ENCODE measurements at regions of chr6 and their contacts with region 1.

Region 1: GRCh38 chr6:13428583-13429405 is 58.6 kb downstream of the GFOD1 start:
- DNase-seq: no peak
- H3K4me3 ChIP-seq: no peak overlapping the region
- H3K27ac ChIP-seq: peak overlapping the region; percentile 78 to 83
- H3K4me1 ChIP-seq: peaks cover 0 to 6% of the 10 kb centered on the region in 2 donors
- H3K27me3 ChIP-seq: no peaks in the 10 kb centered on the region
- CTCF ChIP-seq: no peak
- POLR2A ChIP-seq: no peak

Region 2: GRCh38 chr6:13375360-13375878 is 53.4 kb before region 1 on chr6:
- intact Hi-C with region 1: no loop called
- DNase-seq: no peak
- H3K4me3 ChIP-seq: no peak overlapping the region
- H3K27ac ChIP-seq: no peak overlapping the region
- H3K4me1 ChIP-seq: no peaks in the 10 kb centered on the region
- H3K27me3 ChIP-seq: no peaks in the 10 kb centered on the region
- CTCF ChIP-seq: no peak
- POLR2A ChIP-seq: no peak

Region 3: GRCh38 chr6:13407709-13408695 is 20.8 kb before region 1 on chr6:
- intact Hi-C with region 1: loop called (anchors 1 kb)
- DNase-seq: peak in 1 of 2 donors; percentile 54
- H3K4me3 ChIP-seq: no peak overlapping the region
- H3K27ac ChIP-seq: peak overlapping the region; percentile 81 to 86
- H3K4me1 ChIP-seq: peaks cover 4 to 5% of the 10 kb centered on the region in 2 donors
- H3K27me3 ChIP-seq: no peaks in the 10 kb centered on the region
- CTCF ChIP-seq: no peak
- POLR2A ChIP-seq: no peak

Region 4: DNA sequence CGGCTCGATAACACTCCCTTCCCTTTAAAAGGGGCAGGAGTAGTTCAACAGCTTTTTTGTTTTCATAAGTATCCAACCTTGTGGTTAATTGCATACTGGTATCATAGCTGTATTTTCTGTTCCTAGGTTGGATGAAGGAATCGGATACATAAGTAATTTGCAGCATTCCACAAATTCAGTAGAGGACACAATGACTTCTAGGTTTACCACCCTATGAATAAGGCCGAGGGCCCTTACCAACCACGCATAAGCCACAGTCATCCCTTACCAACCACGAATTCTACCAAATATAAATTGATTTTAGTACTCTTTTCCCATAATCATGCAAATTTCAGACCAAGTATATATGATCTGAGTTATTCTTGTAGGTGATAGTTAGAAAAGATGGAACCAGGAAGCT is 349.2 kb after region 1 on chr6:
- intact Hi-C with region 1: no loop called
- DNase-seq: no peak
- H3K4me3 ChIP-seq: no peak overlapping the region
- H3K27ac ChIP-seq: no peak overlapping the region
- H3K4me1 ChIP-seq: no peaks in the 10 kb centered on the region
- H3K27me3 ChIP-seq: no peaks in the 10 kb centered on the region
- CTCF ChIP-seq: no peak
- POLR2A ChIP-seq: no peak